Spleen (tissue), 13 donors: ENCODE measurements at regions of chr1 and their contacts with region 1.

Region 1: DNA sequence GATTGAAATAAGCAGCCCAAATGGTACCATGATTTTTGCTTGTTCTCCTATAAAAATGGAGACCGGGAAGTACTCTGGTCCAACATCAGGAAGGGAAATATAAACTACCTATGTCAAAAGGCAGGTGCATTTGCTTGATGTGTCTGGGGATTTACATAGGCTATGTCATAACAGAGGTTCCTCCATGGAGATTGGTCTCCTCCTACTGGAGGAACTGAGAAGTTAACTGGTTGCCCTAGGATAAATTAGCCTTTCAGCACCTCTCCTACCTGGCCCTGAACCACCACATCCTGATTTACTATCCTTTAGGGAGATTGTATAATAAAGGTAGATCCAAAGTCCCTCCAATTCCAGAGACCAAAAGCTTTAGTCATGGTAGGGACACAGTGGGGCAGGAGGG is 1109.3 kb upstream of the B3GALT2 start:
- DNase-seq: no peak
- H3K4me3 ChIP-seq: no peak overlapping the region
- H3K27ac ChIP-seq: no peak overlapping the region
- H3K4me1 ChIP-seq: peaks cover 0 to 4% (median 0%) of the 10 kb centered on the region in 6 donors
- H3K27me3 ChIP-seq: no peaks in the 10 kb centered on the region
- CTCF ChIP-seq: peak; percentile 15 to 70 (median 56)
- POLR2A ChIP-seq: no peak

Region 2: DNA sequence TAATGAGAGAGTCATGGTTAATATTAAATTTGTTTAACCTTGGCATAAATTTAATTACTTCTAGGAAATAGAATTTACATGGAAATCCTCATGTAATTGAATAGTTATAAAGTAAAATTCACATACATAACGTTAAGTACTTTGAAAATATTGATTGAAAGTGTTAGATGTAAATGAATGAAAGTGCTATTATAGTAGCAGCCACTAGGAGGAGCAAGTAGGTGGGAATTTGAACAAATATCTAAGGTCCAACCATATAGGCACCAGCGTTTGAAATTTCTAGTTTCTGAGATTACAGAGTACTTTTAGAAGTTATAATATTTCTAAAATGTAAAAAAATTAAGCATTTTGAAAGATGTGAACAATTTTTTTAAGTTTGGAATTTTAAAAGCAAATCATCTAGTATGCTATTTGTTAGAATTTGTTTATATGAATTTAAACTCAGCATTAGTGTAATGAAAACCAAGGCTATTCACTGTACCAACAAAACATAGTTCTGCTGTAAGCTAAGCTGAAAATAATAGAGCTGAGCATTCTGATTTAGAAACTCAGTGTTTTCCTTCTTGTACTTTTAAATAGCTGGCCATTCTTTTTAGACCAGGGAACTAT is 1112.6 kb before region 1 on chr1:
- intact Hi-C with region 1: loop called (anchors 10 kb)
- DNase-seq: no peak
- H3K4me3 ChIP-seq: no peak overlapping the region
- H3K27ac ChIP-seq: no peak overlapping the region
- H3K4me1 ChIP-seq: peaks cover 15 to 71% (median 42%) of the 10 kb centered on the region in 6 donors
- H3K27me3 ChIP-seq: no peaks in the 10 kb centered on the region
- CTCF ChIP-seq: peak; percentile 14 to 79 (median 69)
- POLR2A ChIP-seq: no peak